Sciatic nerve (tissue), 2 donors: ENCODE measurements at regions of chr16 and their contacts with region 1.

Region 1: GRCh38 chr16:87033541-87034300 is 283.5 kb downstream of the C16orf95 start:
- DNase-seq: no peak
- ATAC-seq: peak; percentile 22

Region 2: GRCh38 chr16:86975445-86975844 is 58.3 kb before region 1 on chr16:
- intact Hi-C with region 1: loop called (anchors 10 kb)
- DNase-seq: no peak
- ATAC-seq: peak; percentile 88